Gastrocnemius medialis (tissue), 4 donors: ENCODE measurements at regions of chr5 and their contacts with region 1.

Region 1: GRCh38 chr5:149567226-149567625 is 14.1 kb upstream of the ARHGEF37 start:
- DNase-seq: no peak
- ATAC-seq: no peak
- H3K4me3 ChIP-seq: no peak overlapping the region
- H3K27ac ChIP-seq: no peak overlapping the region
- H3K4me1 ChIP-seq: peaks cover 10 to 16% of the 10 kb centered on the region in 2 donors
- H3K27me3 ChIP-seq: no peaks in the 10 kb centered on the region
- CTCF ChIP-seq: no peak
- POLR2A ChIP-seq: no peak

Region 2: GRCh38 chr5:149381987-149382340 is 185.3 kb before region 1 on chr5:
- in situ Hi-C with region 1: loop called (anchors 5 kb)
- intact Hi-C with region 1: loop called (anchors 1 kb)
- DNase-seq: peak; percentile 40 to 62
- ATAC-seq: peak; percentile 83 to 84
- H3K4me3 ChIP-seq: peak overlapping the region in 1 of 4 donors; percentile 22
- H3K27ac ChIP-seq: peak overlapping the region in 3 of 4 donors; percentile 64 to 76 (median 75)
- H3K4me1 ChIP-seq: peaks cover 21 to 24% of the 10 kb centered on the region in 2 donors
- H3K27me3 ChIP-seq: no peaks in the 10 kb centered on the region
- CTCF ChIP-seq: peak; percentile 82 to 98 (median 94)
- POLR2A ChIP-seq: no peak

Region 3: DNA sequence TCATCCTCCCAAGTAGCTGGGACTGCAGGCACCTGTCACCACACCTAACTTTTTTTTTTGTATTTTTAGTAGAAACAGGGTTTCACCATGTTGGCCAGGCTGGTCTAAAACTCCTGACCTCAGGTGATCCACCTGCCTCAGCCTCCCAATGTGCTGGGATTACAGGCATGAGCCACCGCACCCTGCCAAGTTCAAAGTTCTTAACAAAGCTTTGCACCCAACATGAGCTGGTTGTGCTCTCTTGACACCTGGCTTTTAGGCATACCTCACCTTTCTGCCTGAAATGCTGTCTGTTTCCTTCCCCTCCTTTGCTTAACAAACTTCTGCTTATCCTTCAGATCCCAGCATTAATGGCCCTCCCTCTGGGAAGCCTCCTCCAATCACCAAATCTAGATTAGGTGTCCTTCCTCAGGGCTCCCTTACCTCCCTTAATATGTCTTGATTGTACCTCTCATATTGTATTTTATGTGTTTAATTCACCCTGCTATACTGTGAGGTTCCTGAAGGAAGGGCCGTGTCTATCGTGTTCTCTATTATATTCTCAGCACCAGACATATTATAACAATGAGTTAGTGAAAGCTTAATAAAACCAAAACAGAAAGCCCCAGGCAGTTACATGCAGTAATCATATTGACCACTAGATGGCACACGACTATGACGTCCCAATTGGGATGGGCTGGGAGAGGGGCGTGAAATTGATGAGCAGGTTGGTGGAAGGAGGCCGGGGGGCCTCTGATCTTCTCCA is 100.0 kb after region 1 on chr5:
- in situ Hi-C with region 1: no loop called
- intact Hi-C with region 1: no loop called
- DNase-seq: no peak
- ATAC-seq: peak; percentile 41 to 47
- H3K4me3 ChIP-seq: no peak overlapping the region
- H3K27ac ChIP-seq: peak overlapping the region; percentile 5 to 49 (median 27)
- H3K4me1 ChIP-seq: peaks cover 19 to 29% of the 10 kb centered on the region in 2 donors
- H3K27me3 ChIP-seq: no peaks in the 10 kb centered on the region
- CTCF ChIP-seq: peak; percentile 79 to 88 (median 86)
- POLR2A ChIP-seq: no peak